PC-3 (cell line): ENCODE measurements at regions of chr1 and their contacts with region 1.

Region 1: GRCh38 chr1:26538480-26539412 is 9.2 kb downstream of the RPS6KA1 start:
- DNase-seq: peak; percentile 63
- ATAC-seq: peak; percentile 18; the same call in 1 of the 2 replicates
- H3K4me3 ChIP-seq: no peak overlapping the region
- H3K27ac ChIP-seq: peak overlapping the region; percentile 21
- H3K4me1 ChIP-seq: peaks cover 23% of the 10 kb centered on the region
- H3K27me3 ChIP-seq: no peaks in the 10 kb centered on the region
- CTCF ChIP-seq: peak; percentile 74

Region 2: GRCh38 chr1:26477446-26478152 is 61.1 kb before region 1 on chr1:
- CTCF ChIA-PET with region 1: no interaction called
- POLR2A ChIA-PET with region 1: no interaction called
- intact Hi-C with region 1: no loop called
- DNase-seq: no peak
- ATAC-seq: no peak
- H3K4me3 ChIP-seq: no peak overlapping the region
- H3K27ac ChIP-seq: no peak overlapping the region
- H3K4me1 ChIP-seq: peaks cover 12% of the 10 kb centered on the region
- H3K27me3 ChIP-seq: no peaks in the 10 kb centered on the region
- CTCF ChIP-seq: no peak

Region 3: GRCh38 chr1:26500488-26501175 is 38.1 kb before region 1 on chr1:
- CTCF ChIA-PET with region 1: interaction called, 10 read pairs
- POLR2A ChIA-PET with region 1: interaction called, 4 read pairs
- intact Hi-C with region 1: loop called (anchors 2 kb)
- DNase-seq: peak; percentile 76
- ATAC-seq: peak; percentile 79
- H3K4me3 ChIP-seq: peak overlapping the region; percentile 73
- H3K27ac ChIP-seq: peak overlapping the region; percentile 93
- H3K4me1 ChIP-seq: peaks cover 19% of the 10 kb centered on the region
- H3K27me3 ChIP-seq: no peaks in the 10 kb centered on the region
- CTCF ChIP-seq: peak; percentile 12; the same call in 1 of the 2 replicates